A549 (cell line): ENCODE measurements at regions of chr2 and their contacts with region 1.

Region 1: GRCh38 chr2:85327822-85328617 is at the start of gene TGOLN2:
- DNase-seq: peak; percentile 94 to 98
- ATAC-seq: peak; percentile 99
- H3K4me3 ChIP-seq: peak within 1 kb of the TSS; percentile 65
- H3K27ac ChIP-seq: peak within 1 kb of the TSS; percentile 90 to 95
- H3K4me1 ChIP-seq: peaks cover 33% of the 10 kb centered on the region
- CTCF ChIP-seq: no peak
- EP300 ChIP-seq: no peak
- POLR2A ChIP-seq: peak; percentile 95
- RAD21 ChIP-seq: no peak
- polyA plus RNA-seq, gene TGOLN2: 159 and 177 TPM in 2 replicates

Region 2: DNA sequence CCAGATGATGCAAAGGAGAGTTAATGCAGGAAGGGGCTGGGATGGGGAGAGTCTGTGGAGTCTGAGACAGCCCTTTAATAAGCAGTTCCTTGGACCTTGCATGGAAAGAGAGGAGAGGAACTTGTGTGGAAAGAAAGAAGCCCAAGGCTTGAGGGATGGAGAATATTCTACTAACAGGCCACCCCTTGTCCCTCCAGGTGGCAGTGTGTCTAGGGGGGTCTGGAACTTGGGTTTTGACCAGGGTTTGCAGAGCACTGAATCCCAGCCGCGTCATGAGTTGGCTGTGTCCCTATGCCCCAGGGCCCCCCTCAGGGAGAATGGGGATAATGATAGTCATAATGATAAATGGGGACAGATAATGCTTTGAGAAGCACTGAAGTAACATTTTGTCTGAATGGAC is 179.8 kb before region 1 on chr2:
- CTCF ChIA-PET with region 1: no interaction called
- POLR2A ChIA-PET with region 1: no interaction called
- DNase-seq: no peak
- ATAC-seq: no peak; a peak in 1 of 6 replicates
- H3K4me3 ChIP-seq: no peak overlapping the region
- H3K27ac ChIP-seq: no peak overlapping the region
- H3K4me1 ChIP-seq: no peaks in the 10 kb centered on the region
- CTCF ChIP-seq: 0 out of 3 replicates have a peak, but pooled peaks have one; percentile 8
- EP300 ChIP-seq: no peak
- POLR2A ChIP-seq: no peak
- RAD21 ChIP-seq: no peak

Region 3: GRCh38 chr2:85308896-85309555 is 19.0 kb before region 1 on chr2:
- CTCF ChIA-PET with region 1: interaction called, 3 read pairs
- POLR2A ChIA-PET with region 1: interaction called, 10 read pairs
- DNase-seq: no peak
- ATAC-seq: peak; percentile 21 to 35; a peak in 4 of 6 replicates
- H3K4me3 ChIP-seq: no peak overlapping the region
- H3K27ac ChIP-seq: peak overlapping the region in 1 of 2 experiments; percentile 2; a peak in 1 of 6 replicates
- H3K4me1 ChIP-seq: peaks cover 5% of the 10 kb centered on the region; the same call in 1 of the 3 replicates
- CTCF ChIP-seq: no peak
- EP300 ChIP-seq: no peak
- POLR2A ChIP-seq: no peak
- RAD21 ChIP-seq: no peak

Region 4: GRCh38 chr2:85340034-85340892 is 12.2 kb after region 1 on chr2:
- CTCF ChIA-PET with region 1: interaction called, 5 read pairs
- POLR2A ChIA-PET with region 1: interaction called, 15 read pairs
- DNase-seq: no peak
- ATAC-seq: peak; percentile 11 to 29; a peak in 3 of 6 replicates
- H3K4me3 ChIP-seq: no peak overlapping the region
- H3K27ac ChIP-seq: no peak overlapping the region
- H3K4me1 ChIP-seq: no peaks in the 10 kb centered on the region
- CTCF ChIP-seq: no peak
- EP300 ChIP-seq: no peak
- POLR2A ChIP-seq: no peak
- RAD21 ChIP-seq: no peak

Region 5: DNA sequence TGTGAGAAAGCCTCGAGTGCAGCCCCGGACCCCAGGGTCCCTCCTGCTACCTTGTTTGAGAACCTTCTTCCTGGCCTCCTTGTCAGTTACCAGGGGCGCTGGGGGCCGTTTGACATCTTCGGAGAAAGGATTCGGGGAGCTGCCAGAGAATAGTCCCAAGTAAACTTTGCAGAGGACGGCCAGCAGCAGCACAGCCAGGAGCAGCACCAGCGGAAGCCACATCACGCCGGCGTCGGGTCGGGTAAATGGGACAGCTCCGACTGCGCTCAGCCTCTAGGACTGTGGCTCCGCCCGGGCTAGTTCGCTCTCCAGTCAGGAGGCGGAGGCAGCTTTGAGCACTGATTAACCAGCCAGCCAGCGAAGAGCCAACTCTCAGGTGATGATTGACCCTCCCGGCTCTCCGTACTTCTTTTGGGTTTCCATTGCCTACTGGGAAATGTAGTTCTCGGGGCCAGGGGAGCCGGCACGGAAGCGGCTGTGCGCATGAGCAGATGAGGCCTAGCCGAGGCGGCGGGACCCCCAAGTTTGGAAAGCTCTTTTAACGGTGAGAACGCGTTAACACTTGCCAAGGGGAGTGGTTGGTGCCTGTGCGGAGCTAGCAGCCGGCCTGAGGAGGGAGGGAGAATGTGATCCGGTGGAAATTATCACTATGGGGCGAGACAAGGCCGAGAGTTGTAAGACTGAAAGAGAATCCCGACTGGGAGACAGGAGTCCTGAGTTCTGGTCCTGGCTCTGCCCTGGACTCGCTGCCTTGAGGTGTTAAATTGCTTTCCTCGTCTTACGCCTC is 26.5 kb after region 1 on chr2 and contains the starts of genes ELMOD3 and RETSAT:
- CTCF ChIA-PET with region 1: interaction called, 3 read pairs
- POLR2A ChIA-PET with region 1: interaction called, 31 read pairs
- DNase-seq: peak; percentile 98 to 100
- ATAC-seq: peak; percentile 94 to 99
- H3K4me3 ChIP-seq: peak within 1 kb of the TSS; percentile 83
- H3K27ac ChIP-seq: peak within 1 kb of the TSS; percentile 85 to 91
- H3K4me1 ChIP-seq: peaks cover 15% of the 10 kb centered on the region
- CTCF ChIP-seq: no peak
- EP300 ChIP-seq: no peak
- POLR2A ChIP-seq: peak; percentile 99
- RAD21 ChIP-seq: no peak
- polyA plus RNA-seq, gene ELMOD3: 29.9 and 31.9 TPM in 2 replicates
- polyA plus RNA-seq, gene RETSAT: 51.6 and 52.3 TPM in 2 replicates

Region 6: DNA sequence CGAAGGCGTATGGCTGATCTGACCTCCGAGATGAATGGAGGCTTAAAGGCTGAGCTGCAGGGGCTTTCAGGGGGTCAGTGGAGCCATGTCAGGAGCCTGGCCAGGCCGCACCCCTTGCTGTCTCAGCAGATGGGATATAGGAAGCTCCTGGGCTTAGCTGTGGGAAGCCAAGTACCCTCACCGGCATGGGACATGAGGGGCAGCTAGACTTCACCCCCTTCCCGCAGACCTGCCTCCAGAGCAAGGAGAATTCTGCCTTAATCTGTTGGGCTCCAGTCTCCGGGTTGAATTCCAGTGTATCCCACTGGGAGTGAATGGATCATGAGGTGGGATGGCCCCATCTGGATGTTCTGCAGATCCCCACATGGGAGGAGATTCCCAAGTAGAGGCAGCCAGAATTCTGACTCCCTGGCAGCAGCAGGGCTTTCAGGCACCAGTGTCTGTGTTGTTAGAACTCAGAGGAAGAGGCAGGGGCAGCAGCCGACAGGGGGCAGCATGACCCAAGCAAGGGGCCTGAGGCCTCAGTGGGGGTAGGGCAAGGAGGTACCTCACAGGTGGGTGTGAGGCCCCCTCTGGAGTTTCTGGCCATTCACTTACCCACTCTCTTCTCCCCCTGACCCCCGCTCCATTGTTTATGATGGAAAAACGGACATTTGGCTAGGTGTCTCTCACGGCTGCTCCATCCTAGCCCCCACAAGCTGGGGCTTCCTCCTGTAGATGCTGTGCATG is 63.1 kb after region 1 on chr2:
- CTCF ChIA-PET with region 1: no interaction called
- POLR2A ChIA-PET with region 1: no interaction called
- DNase-seq: peak; percentile 71 to 85
- ATAC-seq: peak; percentile 79 to 92
- H3K4me3 ChIP-seq: no peak overlapping the region
- H3K27ac ChIP-seq: no peak overlapping the region
- H3K4me1 ChIP-seq: peaks cover 6% of the 10 kb centered on the region; the same call in 2 of the 3 replicates
- CTCF ChIP-seq: peak; percentile 83
- EP300 ChIP-seq: no peak
- POLR2A ChIP-seq: no peak
- RAD21 ChIP-seq: peak; percentile 93 to 98